ENCODE measurements at regions of chr6 and their contacts with region 1.

Region 1: DNA sequence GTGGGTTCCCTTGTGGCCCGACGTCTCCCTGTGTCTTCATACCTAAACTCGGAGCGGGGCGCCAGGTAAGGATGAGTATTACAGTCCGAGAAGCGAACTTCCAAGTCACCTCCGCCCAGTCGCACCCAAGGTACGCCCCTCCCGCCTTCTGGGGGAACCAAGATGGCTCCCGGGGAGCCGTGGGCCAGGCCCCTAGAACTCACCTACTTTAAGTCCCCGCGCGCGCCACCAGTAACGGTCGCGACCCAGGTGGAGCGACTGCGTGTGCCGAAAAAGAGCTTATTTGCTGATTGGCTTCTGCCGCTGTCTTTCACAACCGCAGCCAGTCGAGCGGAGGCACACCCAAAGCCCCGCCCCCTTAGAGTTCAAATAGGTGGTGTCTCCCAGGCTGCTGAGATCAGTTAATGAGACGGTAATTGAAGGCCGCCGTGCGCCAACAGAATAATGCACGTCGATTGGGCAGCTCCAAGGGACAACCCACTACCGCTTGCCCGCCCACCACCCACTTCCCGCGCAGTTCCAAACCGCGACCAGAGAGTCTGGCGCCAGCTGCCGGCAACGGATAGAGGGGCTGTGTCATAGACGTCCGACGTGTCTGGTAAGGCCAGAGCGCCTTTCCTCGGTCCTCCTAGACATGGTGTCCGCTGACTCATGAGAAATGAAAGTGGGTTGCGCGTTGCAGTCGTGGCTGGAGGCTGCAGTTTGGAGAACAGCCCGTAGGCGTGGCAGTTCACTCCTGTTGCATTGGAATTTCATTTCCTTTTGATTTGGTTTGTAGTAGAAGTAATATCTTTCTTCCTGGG is at the start of gene MDC1:
- DNase-seq: peak; percentile 100
- H3K4me3 ChIP-seq: peak within 1 kb of the TSS; percentile 7 to 80 (median 72)
- H3K27ac ChIP-seq: peak within 1 kb of the TSS; percentile 82
- H3K4me1 ChIP-seq: peaks cover 23% of the 10 kb centered on the region
- H3K27me3 ChIP-seq: no peaks in the 10 kb centered on the region
- CTCF ChIP-seq: peak in 1 of 2 donors; percentile 34
- POLR2A ChIP-seq: peak; percentile 82
- total RNA-seq, gene MDC1: 42.3 and 43.6 TPM in 2 replicates

Region 2: GRCh38 chr6:30626484-30627366 is 90.5 kb before region 1 on chr6 and contains the start of gene ATAT1:
- CTCF ChIA-PET with region 1: no interaction called
- POLR2A ChIA-PET with region 1: interaction called, 16 read pairs
- dilution Hi-C with region 1: no loop called
- intact Hi-C with region 1: no loop called
- DNase-seq: peak; percentile 89
- H3K4me3 ChIP-seq: peak within 1 kb of the TSS; percentile 22 to 64 (median 51)
- H3K27ac ChIP-seq: peak within 1 kb of the TSS; percentile 66
- H3K4me1 ChIP-seq: peaks cover 8% of the 10 kb centered on the region
- H3K27me3 ChIP-seq: no peaks in the 10 kb centered on the region
- CTCF ChIP-seq: peak; percentile 31 to 50
- POLR2A ChIP-seq: peak; percentile 97
- total RNA-seq, gene ATAT1: 18.4 and 20.2 TPM in 2 replicates

Region 3: DNA sequence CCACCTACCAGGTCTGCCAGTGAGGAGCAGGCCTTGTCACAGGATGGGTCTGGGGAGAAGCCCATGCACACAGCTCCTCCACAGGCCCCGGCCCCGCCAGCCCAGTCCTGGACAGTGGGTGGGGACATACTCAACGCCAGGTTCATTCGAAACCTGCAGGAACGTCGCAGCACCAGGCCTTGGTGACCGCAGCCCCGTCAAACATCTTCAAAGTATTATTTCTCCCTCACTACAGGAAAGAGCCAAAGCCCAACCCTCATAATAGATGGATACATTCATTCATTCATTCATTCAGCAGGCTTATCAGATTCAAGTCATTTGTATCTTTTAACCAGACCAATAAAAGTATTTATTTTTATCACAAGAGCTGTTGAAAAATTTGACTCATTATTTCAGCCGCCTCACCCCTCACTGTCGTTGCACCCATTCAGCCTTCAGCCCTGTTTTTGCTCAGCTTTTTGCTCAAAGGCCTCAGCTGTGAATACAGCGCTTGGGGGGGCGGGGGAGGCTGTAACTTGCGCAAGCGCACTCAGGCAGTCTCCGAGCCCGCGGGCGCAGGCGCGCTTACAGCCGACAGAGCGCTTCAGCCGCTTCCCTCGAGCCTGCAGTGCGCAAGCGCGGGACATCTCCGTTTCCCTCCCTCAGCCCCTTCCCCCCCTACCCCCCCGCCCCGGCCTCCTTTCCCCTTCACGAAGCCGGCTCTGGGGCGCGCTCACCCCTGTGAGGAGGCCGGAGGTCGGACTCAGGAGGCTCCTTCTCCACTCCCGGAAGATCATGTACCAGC is 70.6 kb before region 1 on chr6 and contains the start of gene C6orf136:
- CTCF ChIA-PET with region 1: interaction called, 3 read pairs
- POLR2A ChIA-PET with region 1: no interaction called
- dilution Hi-C with region 1: no loop called
- intact Hi-C with region 1: loop called (anchors 2 kb)
- DNase-seq: peak; percentile 93
- H3K4me3 ChIP-seq: peak within 1 kb of the TSS; percentile 70 to 99 (median 76)
- H3K27ac ChIP-seq: peak within 1 kb of the TSS; percentile 26
- H3K4me1 ChIP-seq: peaks cover 8% of the 10 kb centered on the region
- H3K27me3 ChIP-seq: no peaks in the 10 kb centered on the region
- CTCF ChIP-seq: no peak
- POLR2A ChIP-seq: no peak
- total RNA-seq, gene C6orf136: 18.5 and 21.0 TPM in 2 replicates

Region 4: DNA sequence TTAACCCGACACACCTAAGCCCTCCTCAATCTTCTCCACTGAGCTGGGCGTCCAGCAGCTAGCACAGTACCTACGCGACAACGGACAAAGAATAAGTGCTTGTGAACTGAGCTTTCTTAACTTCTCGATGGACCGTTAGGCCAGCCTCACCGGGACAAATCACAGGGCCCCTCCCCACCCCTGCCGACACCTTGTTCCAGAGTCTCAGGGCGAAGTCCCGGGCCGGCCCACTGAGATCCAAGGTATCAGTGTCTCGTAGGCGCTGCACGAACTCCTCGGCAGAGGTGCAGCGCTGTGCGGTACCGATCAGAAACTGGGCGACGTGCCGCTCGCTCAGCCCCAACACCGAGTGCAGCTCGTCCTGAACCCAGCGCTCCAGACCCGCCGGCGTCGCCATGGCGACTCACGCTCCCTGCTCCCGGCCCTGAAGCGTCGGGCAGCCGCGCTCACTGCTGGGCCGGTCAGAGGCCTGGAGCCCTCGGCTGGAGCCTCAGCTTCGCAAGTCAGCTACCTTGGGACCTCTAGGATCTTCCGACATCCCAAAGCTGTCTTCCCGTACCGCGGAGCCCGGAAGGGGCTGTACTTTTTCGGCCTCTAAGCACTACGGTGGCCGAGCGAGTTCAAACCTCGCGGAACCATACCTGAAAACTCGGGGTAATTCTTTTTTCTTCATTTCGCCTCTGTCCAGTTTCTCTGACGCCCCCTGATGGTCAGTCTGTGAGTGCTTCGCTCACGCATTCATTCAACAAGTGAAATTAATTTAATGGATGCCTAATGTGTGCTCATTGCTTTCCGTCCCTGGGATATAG is 44.6 kb before region 1 on chr6 and contains the start of gene DHX16:
- CTCF ChIA-PET with region 1: interaction called, 10 read pairs
- POLR2A ChIA-PET with region 1: no interaction called
- dilution Hi-C with region 1: no loop called
- intact Hi-C with region 1: no loop called
- DNase-seq: peak; percentile 97
- H3K4me3 ChIP-seq: peak within 1 kb of the TSS; percentile 38 to 82 (median 73)
- H3K27ac ChIP-seq: peak within 1 kb of the TSS; percentile 11
- H3K4me1 ChIP-seq: peaks cover 6% of the 10 kb centered on the region
- H3K27me3 ChIP-seq: no peaks in the 10 kb centered on the region
- CTCF ChIP-seq: peak; percentile 84 to 93
- POLR2A ChIP-seq: peak; percentile 85
- total RNA-seq, gene DHX16: 36.3 and 38.2 TPM in 2 replicates

Region 5: DNA sequence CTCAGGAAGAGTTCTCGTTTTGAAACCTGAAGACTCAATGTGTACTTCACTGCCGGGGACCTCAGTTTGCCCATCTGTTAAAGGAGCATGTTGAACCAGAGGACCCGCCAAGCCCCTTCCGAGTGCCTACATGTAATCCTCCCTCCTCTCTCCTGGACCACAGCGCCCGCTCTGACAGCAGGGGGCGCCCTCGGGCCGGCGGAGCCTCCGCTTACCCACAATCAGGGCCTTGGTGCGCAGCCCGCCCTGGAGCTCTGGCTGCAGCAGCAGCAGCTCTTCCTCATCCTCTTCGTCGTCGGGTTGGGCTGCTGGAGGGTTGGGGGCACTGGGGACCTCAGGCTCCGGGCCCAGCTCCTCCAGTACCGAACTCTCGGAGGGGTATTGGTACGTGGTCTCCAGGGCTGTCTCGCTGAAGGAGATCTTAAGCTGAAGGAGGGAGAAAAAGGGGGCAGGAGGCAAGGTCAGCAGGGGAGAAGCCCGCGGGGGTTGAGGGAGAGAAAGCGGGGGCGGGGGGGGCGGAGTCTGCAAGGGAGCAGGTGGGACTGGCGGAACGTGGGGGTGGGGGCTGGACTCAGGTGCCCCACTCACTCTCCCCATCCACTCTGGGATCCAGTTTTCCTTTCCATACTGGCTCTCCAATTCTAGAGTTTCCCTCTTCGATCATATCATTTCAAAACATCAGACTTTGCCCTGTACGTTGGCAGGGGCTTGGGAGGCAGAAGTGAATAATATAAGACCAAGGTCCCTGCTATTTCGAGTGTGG is 38.1 kb before region 1 on chr6:
- CTCF ChIA-PET with region 1: interaction called, 296 read pairs
- POLR2A ChIA-PET with region 1: interaction called, 34 read pairs
- dilution Hi-C with region 1: no loop called
- intact Hi-C with region 1: loop called (anchors 1 kb)
- DNase-seq: peak; percentile 85
- H3K4me3 ChIP-seq: peak overlapping the region in 2 of 3 experiments; percentile 8 to 27
- H3K27ac ChIP-seq: peak overlapping the region; percentile 2
- H3K4me1 ChIP-seq: peaks cover 31% of the 10 kb centered on the region
- H3K27me3 ChIP-seq: no peaks in the 10 kb centered on the region
- CTCF ChIP-seq: peak; percentile 95 to 96
- POLR2A ChIP-seq: no peak

Region 6: GRCh38 chr6:30686908-30687658 is 30.2 kb before region 1 on chr6:
- CTCF ChIA-PET with region 1: interaction called, 296 read pairs
- POLR2A ChIA-PET with region 1: interaction called, 34 read pairs
- dilution Hi-C with region 1: no loop called
- intact Hi-C with region 1: loop called (anchors 1 kb)
- DNase-seq: peak; percentile 93
- H3K4me3 ChIP-seq: peak overlapping the region; percentile 76 to 92 (median 81)
- H3K27ac ChIP-seq: peak overlapping the region; percentile 93
- H3K4me1 ChIP-seq: peaks cover 33% of the 10 kb centered on the region
- H3K27me3 ChIP-seq: no peaks in the 10 kb centered on the region
- CTCF ChIP-seq: no peak
- POLR2A ChIP-seq: peak; percentile 96